ENCODE measurements at regions of chr2 and their contacts with region 1.

Region 1: DNA sequence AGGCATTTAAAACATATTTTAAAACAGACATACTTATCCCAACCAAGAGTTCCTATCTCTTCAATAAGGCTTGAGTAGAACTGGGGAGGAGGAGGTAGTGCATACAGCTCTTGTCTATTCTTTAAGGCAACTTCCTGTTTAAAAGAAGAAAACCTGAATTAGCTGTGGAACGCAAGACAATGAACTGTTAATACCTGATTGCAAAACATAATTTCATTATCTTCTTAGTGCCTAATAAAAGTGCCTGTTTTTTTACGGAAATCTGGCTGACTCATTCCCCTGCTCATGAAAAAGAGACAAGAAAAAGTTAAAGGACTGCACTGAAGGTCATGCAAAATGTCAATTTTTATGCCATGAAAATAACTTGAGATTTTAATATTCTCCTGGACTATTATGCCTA is 19.2 kb downstream of the FANCL start:
- DNase-seq: no peak
- ATAC-seq: no peak
- H3K4me3 ChIP-seq: no peak overlapping the region
- H3K27ac ChIP-seq: no peak overlapping the region
- H3K4me1 ChIP-seq: no peaks in the 10 kb centered on the region
- H3K27me3 ChIP-seq: no peaks in the 10 kb centered on the region
- CTCF ChIP-seq: no peak
- POLR2A ChIP-seq: no peak

Region 2: DNA sequence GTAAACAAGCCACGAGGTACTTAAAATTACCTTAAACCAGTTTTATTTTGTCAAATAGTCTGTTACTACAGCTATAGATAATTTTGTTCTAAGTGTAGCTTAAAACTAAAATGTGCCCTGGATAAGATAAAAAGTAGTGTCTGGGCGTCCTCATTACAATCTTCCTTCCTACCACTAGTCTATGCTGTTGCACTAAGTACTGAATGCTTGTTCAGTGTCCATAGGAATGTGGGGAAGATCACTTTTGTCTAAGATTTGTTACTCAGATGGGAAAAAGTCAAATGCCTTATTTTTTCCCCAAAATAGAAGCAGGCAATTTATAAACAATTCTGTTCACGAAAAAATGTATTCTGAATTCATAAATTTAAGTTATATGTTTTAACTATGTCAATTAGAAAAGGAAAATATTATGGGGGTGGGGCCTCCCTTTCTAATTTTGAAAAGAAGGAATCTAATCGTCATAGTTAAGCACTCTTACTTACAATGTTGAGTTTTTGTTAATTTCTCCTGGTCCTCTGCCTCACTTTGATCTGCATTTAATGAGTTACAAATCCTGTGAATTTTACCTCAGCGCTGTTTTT is 315.7 kb before region 1 on chr2:
- in situ Hi-C with region 1: no loop called
- intact Hi-C with region 1: no loop called
- DNase-seq: no peak
- ATAC-seq: peak; percentile 76 to 81
- H3K4me3 ChIP-seq: no peak overlapping the region
- H3K27ac ChIP-seq: no peak overlapping the region
- H3K4me1 ChIP-seq: no peaks in the 10 kb centered on the region
- H3K27me3 ChIP-seq: no peaks in the 10 kb centered on the region
- CTCF ChIP-seq: peak; percentile 19 to 69 (median 48)
- POLR2A ChIP-seq: no peak

Region 3: DNA sequence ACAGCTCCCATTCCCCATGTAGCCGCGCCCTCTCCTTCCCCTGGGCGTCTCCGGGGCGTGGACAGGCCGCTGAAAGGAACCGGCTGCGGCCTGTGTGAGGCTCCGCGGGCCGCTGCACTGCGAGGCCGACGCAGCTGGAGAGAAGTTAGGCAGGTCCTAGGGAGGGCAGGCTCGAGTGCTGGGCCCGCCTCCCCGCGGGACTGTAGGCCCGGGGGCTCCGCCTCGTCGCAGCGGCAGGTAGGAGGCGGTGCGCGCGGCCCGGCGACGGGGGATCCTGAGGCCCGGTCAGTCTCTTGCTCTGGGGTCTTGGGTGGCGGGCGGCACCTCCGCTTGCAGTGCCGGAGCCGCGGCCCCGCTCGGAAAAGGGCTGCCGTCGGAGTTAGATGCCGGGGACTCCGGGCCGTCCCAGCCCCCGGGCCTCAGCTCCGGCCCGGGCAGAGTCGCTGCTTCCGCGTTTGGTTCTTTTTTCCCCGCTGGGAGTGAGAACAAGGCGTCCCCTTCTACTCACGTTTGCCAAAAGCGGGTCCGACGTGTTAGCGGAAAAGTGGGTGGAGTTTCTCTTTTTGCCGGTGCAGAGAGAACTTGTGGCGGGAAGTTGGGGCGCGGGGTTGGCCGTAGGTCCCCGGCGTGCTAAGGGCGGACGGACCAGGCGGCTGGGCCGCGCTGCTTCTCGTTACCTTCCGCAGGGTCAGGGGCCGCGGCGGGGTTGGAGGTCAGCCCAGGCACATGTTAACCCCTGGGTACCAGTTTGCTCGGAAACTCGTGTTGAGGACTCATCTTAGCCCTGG is 175.1 kb before region 1 on chr2 and contains the start of gene VRK2:
- in situ Hi-C with region 1: no loop called
- intact Hi-C with region 1: loop called (anchors 10 kb)
- DNase-seq: peak; percentile 64 to 81
- ATAC-seq: peak; percentile 88 to 91
- H3K4me3 ChIP-seq: peak within 1 kb of the TSS; percentile 71 to 80 (median 76)
- H3K27ac ChIP-seq: peak within 1 kb of the TSS; percentile 84 to 94 (median 88)
- H3K4me1 ChIP-seq: peaks cover 9 to 10% of the 10 kb centered on the region in 2 donors
- H3K27me3 ChIP-seq: no peaks in the 10 kb centered on the region
- CTCF ChIP-seq: peak in 2 of 5 experiments; percentile 27 to 46
- POLR2A ChIP-seq: peak; percentile 49 to 67
- total RNA-seq, gene VRK2: 12.3 to 24.5 (median 21.2) TPM

Region 4: DNA sequence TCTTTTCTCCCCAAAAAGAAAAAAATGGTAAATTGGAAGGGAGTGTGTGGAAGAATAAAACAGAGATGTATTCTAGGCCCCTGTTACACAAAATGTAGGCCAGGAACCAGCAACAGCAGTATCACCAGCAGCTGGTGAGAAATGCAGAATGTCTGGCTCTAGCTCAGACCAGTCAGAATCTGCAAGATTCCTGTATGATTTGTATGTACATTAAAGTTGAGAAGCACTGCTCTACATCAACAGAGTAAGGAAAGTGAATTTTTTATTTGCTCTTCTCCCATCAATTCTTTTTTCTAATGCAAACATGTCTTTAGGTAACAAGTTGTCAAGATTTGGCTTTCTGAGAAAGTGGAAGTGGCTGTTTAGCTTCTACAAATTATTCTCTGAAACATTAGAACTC is 254.6 kb after region 1 on chr2:
- in situ Hi-C with region 1: no loop called
- intact Hi-C with region 1: no loop called
- DNase-seq: no peak
- ATAC-seq: no peak
- H3K4me3 ChIP-seq: no peak overlapping the region
- H3K27ac ChIP-seq: no peak overlapping the region
- H3K4me1 ChIP-seq: no peaks in the 10 kb centered on the region
- H3K27me3 ChIP-seq: no peaks in the 10 kb centered on the region
- CTCF ChIP-seq: no peak
- POLR2A ChIP-seq: no peak

Region 5: DNA sequence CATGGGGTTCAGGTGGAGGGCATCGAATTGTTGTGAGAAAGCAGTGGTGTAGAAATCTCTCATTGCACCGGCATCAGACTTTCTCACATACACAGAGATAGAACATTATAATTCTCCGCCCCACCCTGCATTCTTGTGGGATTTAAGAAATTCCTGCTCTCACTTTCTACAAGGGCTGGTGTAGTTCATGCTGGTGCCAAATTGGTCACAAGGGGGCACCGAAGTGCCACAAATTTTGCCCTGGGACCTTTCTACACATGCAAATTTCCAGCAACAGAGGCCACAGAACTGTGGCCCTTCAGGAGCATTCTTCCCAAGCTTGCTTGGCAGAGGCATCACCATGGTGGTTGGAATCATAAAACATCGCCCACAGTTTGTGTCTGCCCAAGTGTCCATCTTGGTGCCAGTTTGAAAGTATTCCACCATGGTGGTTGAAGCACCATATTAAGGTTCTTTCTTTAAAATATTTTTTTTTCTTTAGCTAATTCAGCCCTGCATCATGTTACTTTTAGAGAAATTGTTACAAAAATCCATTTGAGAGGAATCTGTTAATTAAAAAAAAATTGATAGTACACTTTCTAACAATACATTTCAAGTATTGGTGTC is 540.4 kb after region 1 on chr2:
- in situ Hi-C with region 1: no loop called
- intact Hi-C with region 1: no loop called
- DNase-seq: no peak
- ATAC-seq: no peak
- H3K4me3 ChIP-seq: no peak overlapping the region
- H3K27ac ChIP-seq: no peak overlapping the region
- H3K4me1 ChIP-seq: no peaks in the 10 kb centered on the region
- H3K27me3 ChIP-seq: no peaks in the 10 kb centered on the region
- CTCF ChIP-seq: no peak
- POLR2A ChIP-seq: no peak